Activated T-helper 1 cell treated with anti-CD3 and anti-CD28 coated beads, Interleukin-12 subunit alpha, Interleukin-12 subunit beta, Interleukin-2, Interleukin-4 antibody, amounts not matched to agents 30 ng/mL and 10 ng/mL and 1 ng/mL, durations not matched to agents 14 hours and 24 hours and 36 hours (primary cell): ENCODE measurements at regions of chr11 and their contacts with region 1.

Region 1: GRCh38 chr11:124108156-124108555 is 7.1 kb upstream of the VWA5A start:
- DNase-seq: no peak
- H3K4me3 Mint-ChIP-seq: no peak overlapping the region
- H3K27ac Mint-ChIP-seq: no peak overlapping the region
- H3K4me1 Mint-ChIP-seq: peaks cover 5% of the 10 kb centered on the region
- H3K27me3 Mint-ChIP-seq: peaks cover 25% of the 10 kb centered on the region

Region 2: GRCh38 chr11:124177352-124177751 is 69.2 kb after region 1 on chr11:
- intact Hi-C with region 1: no loop called
- DNase-seq: no peak
- H3K4me3 Mint-ChIP-seq: no peak overlapping the region
- H3K27ac Mint-ChIP-seq: no peak overlapping the region
- H3K4me1 Mint-ChIP-seq: no peaks in the 10 kb centered on the region
- H3K27me3 Mint-ChIP-seq: peaks cover 8% of the 10 kb centered on the region

Region 3: GRCh38 chr11:124194698-124195410 is 86.7 kb after region 1 on chr11:
- intact Hi-C with region 1: loop called (anchors 1 kb)
- DNase-seq: peak; percentile 22
- H3K4me3 Mint-ChIP-seq: no peak overlapping the region
- H3K27ac Mint-ChIP-seq: no peak overlapping the region
- H3K4me1 Mint-ChIP-seq: no peaks in the 10 kb centered on the region
- H3K27me3 Mint-ChIP-seq: peaks cover 11% of the 10 kb centered on the region